ENCODE measurements at regions of chr1 and their contacts with region 1.

Region 1: GRCh38 chr1:185170291-185170848 is 13.4 kb downstream of the SWT1 start:
- DNase-seq: peak; percentile 65
- ATAC-seq: peak; percentile 93
- H3K4me3 Mint-ChIP-seq: peak overlapping the region; percentile 13
- H3K27ac Mint-ChIP-seq: no peak overlapping the region
- H3K4me1 Mint-ChIP-seq: peaks cover 13% of the 10 kb centered on the region
- H3K27me3 Mint-ChIP-seq: no peaks in the 10 kb centered on the region

Region 2: GRCh38 chr1:184945029-184945428 is 225.3 kb before region 1 on chr1:
- CTCF ChIA-PET with region 1: no interaction called
- POLR2A ChIA-PET with region 1: no interaction called
- DNase-seq: no peak
- ATAC-seq: no peak
- H3K4me3 Mint-ChIP-seq: no peak overlapping the region
- H3K27ac Mint-ChIP-seq: no peak overlapping the region
- H3K4me1 Mint-ChIP-seq: peaks cover 7% of the 10 kb centered on the region
- H3K27me3 Mint-ChIP-seq: no peaks in the 10 kb centered on the region

Region 3: DNA sequence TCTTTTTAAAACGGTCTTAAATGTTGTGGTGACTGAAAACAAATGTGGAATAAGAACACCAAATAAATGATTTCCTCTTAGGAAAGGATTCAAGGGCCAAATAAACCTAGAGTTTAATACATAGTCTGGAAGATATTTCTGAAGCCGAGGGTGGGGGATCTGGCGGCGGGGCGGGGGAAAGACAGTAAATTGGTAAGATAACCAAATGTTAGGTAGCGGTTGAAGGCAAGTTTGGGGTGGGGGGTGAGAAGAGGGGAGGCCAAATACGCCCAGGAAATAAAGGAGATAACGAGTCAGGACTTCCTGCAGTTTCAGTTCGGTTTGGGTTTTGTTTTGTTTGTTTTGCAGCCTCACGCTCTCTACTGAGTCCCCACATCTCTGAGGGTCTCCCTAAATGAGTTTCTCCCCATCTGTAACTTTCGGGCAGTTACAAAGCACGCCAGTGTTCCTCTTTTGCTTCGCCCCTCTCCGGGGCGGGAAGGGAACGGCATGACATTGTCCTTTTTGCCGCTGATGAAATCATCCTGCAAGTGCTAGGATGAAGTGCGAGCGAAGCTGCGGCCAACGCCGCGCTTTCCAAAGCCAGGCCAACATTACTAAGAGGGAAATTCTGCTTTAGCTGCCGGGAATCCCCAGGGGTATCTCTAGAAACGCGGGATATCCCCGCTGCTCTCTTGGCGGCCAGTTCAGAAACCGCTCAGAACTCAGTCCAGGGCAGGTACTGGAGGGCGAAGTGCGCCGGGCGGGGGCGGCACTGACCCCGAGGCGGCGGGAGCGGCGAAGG is 196.9 kb before region 1 on chr1:
- CTCF ChIA-PET with region 1: interaction called, 10 read pairs
- POLR2A ChIA-PET with region 1: no interaction called
- DNase-seq: peak; percentile 26
- ATAC-seq: peak; percentile 8
- H3K4me3 Mint-ChIP-seq: peak overlapping the region; percentile 88
- H3K27ac Mint-ChIP-seq: peak overlapping the region; percentile 89
- H3K4me1 Mint-ChIP-seq: peaks cover 47% of the 10 kb centered on the region
- H3K27me3 Mint-ChIP-seq: peaks cover 19% of the 10 kb centered on the region

Region 4: GRCh38 chr1:185044981-185045813 is 125.2 kb before region 1 on chr1 and contains the start of gene RNF2:
- CTCF ChIA-PET with region 1: interaction called, 40 read pairs
- POLR2A ChIA-PET with region 1: no interaction called
- DNase-seq: peak; percentile 86
- ATAC-seq: peak; percentile 90
- H3K4me3 Mint-ChIP-seq: peak within 1 kb of the TSS; percentile 83
- H3K27ac Mint-ChIP-seq: peak within 1 kb of the TSS; percentile 90
- H3K4me1 Mint-ChIP-seq: peaks cover 29% of the 10 kb centered on the region
- H3K27me3 Mint-ChIP-seq: no peaks in the 10 kb centered on the region
- total RNA-seq, gene RNF2: 18.6 to 22.5 TPM

Region 5: GRCh38 chr1:185238447-185238846 is 68.1 kb after region 1 on chr1:
- CTCF ChIA-PET with region 1: interaction called, 21 read pairs
- POLR2A ChIA-PET with region 1: no interaction called
- DNase-seq: no peak
- ATAC-seq: no peak
- H3K4me3 Mint-ChIP-seq: no peak overlapping the region
- H3K27ac Mint-ChIP-seq: no peak overlapping the region
- H3K4me1 Mint-ChIP-seq: peaks cover 17% of the 10 kb centered on the region
- H3K27me3 Mint-ChIP-seq: no peaks in the 10 kb centered on the region

Region 6: DNA sequence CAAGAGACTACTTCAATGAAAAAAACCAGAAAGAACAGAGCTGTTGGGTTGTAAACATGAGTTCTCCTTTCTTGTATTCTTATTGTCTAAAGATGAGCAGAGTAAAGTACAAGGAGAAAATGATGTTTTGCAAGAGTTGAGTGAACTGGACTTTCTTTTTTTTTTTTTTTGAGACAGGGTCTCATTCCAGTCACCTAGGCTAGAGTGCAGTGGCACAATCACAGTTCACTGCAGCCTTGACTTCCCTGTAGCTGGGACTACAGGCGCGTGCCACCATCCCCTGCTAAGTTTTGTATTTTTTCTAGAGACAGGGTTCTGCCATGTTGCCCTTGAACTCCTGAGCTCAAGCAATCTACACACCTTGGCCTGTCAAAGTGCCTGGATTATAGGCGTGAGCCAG is 153.7 kb after region 1 on chr1:
- CTCF ChIA-PET with region 1: no interaction called
- POLR2A ChIA-PET with region 1: no interaction called
- DNase-seq: no peak
- ATAC-seq: no peak
- H3K4me3 Mint-ChIP-seq: no peak overlapping the region
- H3K27ac Mint-ChIP-seq: no peak overlapping the region
- H3K4me1 Mint-ChIP-seq: peaks cover 28% of the 10 kb centered on the region
- H3K27me3 Mint-ChIP-seq: no peaks in the 10 kb centered on the region

Measured in activated CD8-positive, alpha-beta T cell treated with anti-CD3 and anti-CD28 coated beads, Interleukin-2, amount 10 ng/mL, durations not matched to agents 7 days and 5 days (primary cell).